Activated T-helper 1 cell treated with anti-CD3 and anti-CD28 coated beads, Interleukin-12 subunit alpha, Interleukin-12 subunit beta, Interleukin-2, Interleukin-4 antibody, amounts not matched to agents 30 ng/mL and 10 ng/mL and 1 ng/mL, durations not matched to agents 14 hours and 24 hours and 36 hours (primary cell): ENCODE measurements at regions of chr14 and their contacts with region 1.

Region 1: GRCh38 chr14:61503167-61503801 is 181.9 kb downstream of the PRKCH start:
- DNase-seq: peak; percentile 51
- H3K4me3 Mint-ChIP-seq: peak overlapping the region; percentile 76
- H3K27ac Mint-ChIP-seq: peak overlapping the region; percentile 99
- H3K4me1 Mint-ChIP-seq: peaks cover 94% of the 10 kb centered on the region
- H3K27me3 Mint-ChIP-seq: no peaks in the 10 kb centered on the region

Region 2: DNA sequence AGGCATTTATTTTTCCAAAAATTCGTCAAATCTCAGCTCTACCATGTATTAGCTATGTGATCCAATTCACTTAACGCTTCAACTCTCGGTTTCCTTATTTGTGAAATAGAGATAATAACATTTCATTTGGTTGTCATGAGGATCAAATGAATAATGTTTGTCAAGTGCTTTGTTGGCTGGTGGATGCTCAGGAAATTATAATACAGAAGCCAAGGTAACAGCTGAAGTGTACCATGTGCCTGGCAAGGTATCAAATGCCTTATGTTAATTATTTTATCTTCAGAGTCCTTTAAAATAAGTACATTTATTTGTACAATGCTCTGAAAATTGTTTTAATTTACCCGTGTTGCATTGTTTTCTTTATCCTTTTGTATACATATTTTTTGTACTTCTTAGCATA is 188.0 kb before region 1 on chr14:
- intact Hi-C with region 1: no loop called
- DNase-seq: no peak
- H3K4me3 Mint-ChIP-seq: no peak overlapping the region
- H3K27ac Mint-ChIP-seq: no peak overlapping the region
- H3K4me1 Mint-ChIP-seq: no peaks in the 10 kb centered on the region
- H3K27me3 Mint-ChIP-seq: no peaks in the 10 kb centered on the region

Region 3: GRCh38 chr14:61493239-61493638 is 10.0 kb before region 1 on chr14:
- intact Hi-C with region 1: no loop called
- DNase-seq: no peak
- H3K4me3 Mint-ChIP-seq: no peak overlapping the region
- H3K27ac Mint-ChIP-seq: no peak overlapping the region
- H3K4me1 Mint-ChIP-seq: peaks cover 21% of the 10 kb centered on the region
- H3K27me3 Mint-ChIP-seq: no peaks in the 10 kb centered on the region

Region 4: DNA sequence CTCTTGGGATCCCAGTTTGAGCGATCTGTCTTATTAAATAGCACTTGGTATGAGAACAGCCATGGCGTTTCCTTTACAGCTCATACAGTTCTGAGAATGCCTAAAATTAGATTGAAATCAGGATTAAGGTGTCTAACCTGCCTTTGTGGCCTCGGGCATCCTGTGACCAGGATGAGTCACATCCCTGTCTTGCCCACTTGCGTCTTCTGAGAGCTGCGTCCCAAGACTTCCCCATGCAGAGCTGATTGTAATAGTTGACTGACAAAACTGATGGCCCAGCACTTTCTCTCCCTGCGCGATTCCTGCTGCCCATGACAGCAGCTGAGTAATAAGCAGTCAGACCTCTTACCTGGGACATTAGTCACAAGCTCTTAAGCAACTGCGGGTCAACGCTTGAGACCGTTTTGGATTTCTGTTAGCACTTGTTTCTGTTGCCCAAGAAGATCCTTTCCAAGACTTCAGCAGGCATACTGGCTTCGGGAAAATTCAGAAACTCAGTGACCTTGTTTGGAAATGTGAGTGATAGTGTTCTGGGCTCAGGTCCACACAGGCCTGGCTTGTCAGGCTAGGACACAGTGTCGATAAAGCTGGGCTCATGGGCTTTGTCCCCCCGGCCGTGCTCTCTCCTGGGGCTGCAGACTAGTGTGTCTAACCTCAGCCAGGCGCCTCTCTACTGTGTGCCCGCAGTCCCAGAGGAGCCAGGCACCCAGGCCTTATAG is 22.2 kb after region 1 on chr14:
- intact Hi-C with region 1: loop called (anchors 1 kb)
- DNase-seq: peak; percentile 65
- H3K4me3 Mint-ChIP-seq: peak overlapping the region; percentile 64
- H3K27ac Mint-ChIP-seq: peak overlapping the region; percentile 89
- H3K4me1 Mint-ChIP-seq: peaks cover 82% of the 10 kb centered on the region
- H3K27me3 Mint-ChIP-seq: no peaks in the 10 kb centered on the region

Region 5: GRCh38 chr14:61537563-61538463 is 34.5 kb after region 1 on chr14:
- intact Hi-C with region 1: loop called (anchors 5 kb)
- DNase-seq: no peak
- H3K4me3 Mint-ChIP-seq: peak overlapping the region; percentile 17
- H3K27ac Mint-ChIP-seq: peak overlapping the region; percentile 79
- H3K4me1 Mint-ChIP-seq: peaks cover 82% of the 10 kb centered on the region
- H3K27me3 Mint-ChIP-seq: no peaks in the 10 kb centered on the region

Region 6: DNA sequence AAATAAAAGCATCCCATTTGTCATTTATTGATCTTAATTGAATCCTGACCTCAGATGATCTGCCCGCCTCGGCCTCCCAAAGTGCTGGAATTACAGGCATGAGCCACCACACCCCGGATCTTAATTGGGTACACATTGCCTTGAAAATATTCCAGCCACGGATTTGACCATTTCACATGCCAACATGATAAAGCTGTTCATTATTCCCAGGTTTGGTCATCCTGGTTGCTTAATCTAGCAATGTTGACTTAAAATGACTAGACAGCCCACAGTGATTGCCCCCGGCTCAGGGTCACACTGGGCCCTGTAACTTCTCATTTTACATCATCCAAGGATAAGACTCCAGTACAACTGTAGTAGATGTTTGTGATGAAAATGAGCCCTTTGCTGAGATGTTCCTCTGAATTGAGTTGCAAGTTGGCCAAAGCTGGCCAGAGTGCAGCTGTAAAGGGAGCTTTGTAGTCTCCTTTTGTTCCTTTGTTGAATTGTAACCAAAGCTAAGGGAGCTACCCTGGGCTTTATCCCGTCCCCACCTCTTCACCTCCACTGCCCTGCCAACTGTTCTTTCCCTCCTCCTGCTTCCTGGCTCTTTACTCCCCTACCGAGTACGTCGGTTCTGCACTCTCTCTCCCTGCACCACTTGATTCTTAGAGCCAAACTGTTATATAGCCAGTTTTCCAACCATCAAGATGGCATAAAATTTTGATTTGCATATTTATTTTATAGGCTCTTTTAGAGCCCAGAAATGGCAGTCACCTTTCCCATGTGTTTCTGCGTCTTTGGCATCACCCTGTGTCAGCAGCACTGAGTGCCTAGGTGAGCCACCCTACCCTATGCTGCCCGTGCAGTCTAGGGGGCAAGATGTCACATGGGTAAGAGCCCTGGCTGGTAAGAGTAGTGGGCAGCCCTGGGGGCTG is 50.7 kb after region 1 on chr14:
- intact Hi-C with region 1: loop called (anchors 1 kb)
- DNase-seq: no peak
- H3K4me3 Mint-ChIP-seq: peak overlapping the region; percentile 19
- H3K27ac Mint-ChIP-seq: peak overlapping the region; percentile 84
- H3K4me1 Mint-ChIP-seq: peaks cover 77% of the 10 kb centered on the region
- H3K27me3 Mint-ChIP-seq: no peaks in the 10 kb centered on the region

Region 7: DNA sequence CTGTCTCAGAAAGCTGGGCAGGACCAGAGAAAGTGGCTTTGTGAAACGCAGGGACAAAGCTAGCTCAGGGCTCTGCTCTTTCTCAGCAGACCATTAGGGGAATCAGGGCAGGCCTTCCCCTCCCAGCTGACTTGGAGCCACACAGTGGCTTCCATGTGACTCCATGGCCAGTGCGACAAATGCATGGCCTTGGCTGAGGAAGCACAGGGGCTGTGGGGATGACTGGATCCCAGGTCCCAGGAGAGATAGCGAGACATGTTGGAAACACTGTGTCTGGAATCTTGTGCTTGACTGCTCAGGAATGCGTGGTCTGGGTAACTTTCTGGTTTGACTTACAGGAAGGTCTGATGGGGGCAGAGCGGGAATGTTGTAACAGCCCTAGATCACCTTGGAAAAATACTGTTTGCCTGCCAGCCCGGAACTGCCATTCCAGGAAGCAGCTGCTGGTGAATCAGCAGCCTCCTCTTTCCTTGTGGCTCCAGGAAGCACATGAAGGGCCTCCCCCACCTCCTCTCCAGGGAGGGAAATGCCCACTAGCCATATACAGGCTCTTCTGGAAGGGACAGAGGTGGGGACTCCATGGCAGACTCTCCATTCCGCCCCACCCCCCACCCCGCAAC is 58.5 kb after region 1 on chr14:
- intact Hi-C with region 1: loop called (anchors 2 kb)
- DNase-seq: no peak
- H3K4me3 Mint-ChIP-seq: peak overlapping the region; percentile 37
- H3K27ac Mint-ChIP-seq: peak overlapping the region; percentile 27
- H3K4me1 Mint-ChIP-seq: peaks cover 70% of the 10 kb centered on the region
- H3K27me3 Mint-ChIP-seq: no peaks in the 10 kb centered on the region